HepG2 (cell line): ENCODE measurements at regions of chr9 and their contacts with region 1.

Region 1: GRCh38 chr9:105475302-105475701 is 27.5 kb downstream of the FSD1L start:
- DNase-seq: peak; percentile 39
- ATAC-seq: peak; percentile 88
- H3K4me3 ChIP-seq: no peak overlapping the region
- H3K27ac ChIP-seq: no peak overlapping the region
- H3K4me1 ChIP-seq: 0 out of 2 replicates have a peak, but pooled peaks cover 5% of the 10 kb centered on the region
- H3K27me3 ChIP-seq: no peaks in the 10 kb centered on the region
- CTCF ChIP-seq: peak; percentile 47
- EP300 ChIP-seq: no peak
- POLR2A ChIP-seq: no peak
- RAD21 ChIP-seq: no peak

Region 2: DNA sequence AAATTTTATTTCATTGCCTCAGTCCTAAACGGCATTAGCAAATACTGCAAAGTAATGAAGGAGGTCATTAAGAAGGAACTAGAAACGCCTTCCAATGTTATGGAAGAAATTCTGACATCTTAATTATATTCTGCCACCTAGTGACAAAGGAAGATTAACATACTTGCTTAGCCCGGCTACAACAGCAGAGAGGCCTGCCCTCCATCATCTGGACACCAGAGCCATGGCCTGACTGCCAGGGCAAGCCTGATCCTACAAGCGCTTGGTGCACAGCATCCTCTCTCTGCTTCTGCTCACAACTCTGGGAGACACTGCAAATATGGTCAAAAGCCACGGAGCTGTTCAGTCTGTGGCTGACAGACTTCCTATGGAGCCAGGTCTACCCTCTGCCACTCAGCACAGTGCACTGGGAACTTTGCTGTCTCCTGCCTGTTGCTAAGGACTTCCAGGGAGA is 318.1 kb before region 1 on chr9:
- CTCF ChIA-PET with region 1: no interaction called
- POLR2A ChIA-PET with region 1: no interaction called
- in situ Hi-C with region 1: no loop called
- intact Hi-C with region 1: loop called (anchors 1 kb)
- DNase-seq: peak; percentile 24
- ATAC-seq: peak; percentile 92
- H3K4me3 ChIP-seq: no peak overlapping the region
- H3K27ac ChIP-seq: no peak overlapping the region
- H3K4me1 ChIP-seq: peaks cover 24% of the 10 kb centered on the region
- H3K27me3 ChIP-seq: no peaks in the 10 kb centered on the region
- CTCF ChIP-seq: peak; percentile 74
- EP300 ChIP-seq: no peak
- POLR2A ChIP-seq: no peak
- RAD21 ChIP-seq: peak; percentile 41; the same call in 1 of the 2 replicates

Region 3: DNA sequence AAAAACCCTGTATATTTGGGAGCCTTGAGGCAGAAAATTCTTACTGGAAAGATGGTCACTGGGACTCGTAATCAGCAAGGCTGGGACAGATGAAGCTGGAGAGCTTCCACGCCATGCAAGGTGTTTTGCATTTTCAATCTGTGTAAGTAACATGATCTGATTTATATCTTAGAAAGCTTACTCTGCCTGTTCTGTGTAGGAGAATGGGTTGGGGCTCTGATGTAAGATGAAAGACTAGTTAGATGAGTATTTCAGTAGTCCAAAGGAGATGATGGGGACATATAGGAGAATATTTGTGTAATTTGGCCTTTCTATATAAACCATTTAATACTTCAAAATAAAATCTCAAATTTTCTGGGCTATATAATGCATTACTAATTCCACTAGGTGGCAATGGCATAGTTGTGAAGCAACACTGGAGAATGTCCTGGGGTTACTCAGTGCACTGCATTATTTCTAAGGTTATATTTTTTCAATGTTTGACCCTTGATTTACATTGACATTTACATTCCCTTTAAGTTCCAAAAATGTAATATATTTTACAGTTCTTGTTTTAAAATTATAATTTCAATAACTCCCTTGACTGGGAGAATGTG is 49.4 kb before region 1 on chr9:
- CTCF ChIA-PET with region 1: interaction called, 11 read pairs
- POLR2A ChIA-PET with region 1: no interaction called
- in situ Hi-C with region 1: no loop called
- intact Hi-C with region 1: no loop called
- DNase-seq: no peak
- ATAC-seq: peak; percentile 86
- H3K4me3 ChIP-seq: no peak overlapping the region
- H3K27ac ChIP-seq: no peak overlapping the region
- H3K4me1 ChIP-seq: peaks cover 22% of the 10 kb centered on the region
- H3K27me3 ChIP-seq: no peaks in the 10 kb centered on the region
- CTCF ChIP-seq: peak; percentile 58
- EP300 ChIP-seq: no peak
- POLR2A ChIP-seq: no peak
- RAD21 ChIP-seq: peak; percentile 41; the same call in 1 of the 2 replicates

Region 4: DNA sequence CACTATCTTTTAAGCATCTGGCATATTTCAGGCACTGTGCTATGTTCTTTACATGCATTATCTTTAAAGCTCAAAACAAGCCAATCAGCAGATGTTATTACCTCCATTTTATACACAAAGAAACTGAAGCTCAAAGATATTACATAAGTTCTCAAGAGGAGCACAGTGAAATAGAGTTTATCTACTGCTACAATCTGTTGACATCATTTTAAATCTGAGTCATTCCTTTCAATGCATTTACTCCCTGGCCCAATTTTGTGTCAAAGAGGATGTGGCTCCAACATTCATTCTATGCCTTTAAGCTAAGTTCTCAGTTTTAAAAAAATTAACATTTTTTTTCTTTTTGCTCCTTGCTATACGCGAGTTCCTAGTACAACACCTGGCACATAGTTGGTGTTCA is 901.4 kb after region 1 on chr9:
- CTCF ChIA-PET with region 1: no interaction called
- POLR2A ChIA-PET with region 1: no interaction called
- in situ Hi-C with region 1: no loop called
- intact Hi-C with region 1: no loop called
- DNase-seq: no peak
- ATAC-seq: no peak
- H3K4me3 ChIP-seq: no peak overlapping the region
- H3K27ac ChIP-seq: no peak overlapping the region
- H3K4me1 ChIP-seq: no peaks in the 10 kb centered on the region
- H3K27me3 ChIP-seq: no peaks in the 10 kb centered on the region
- CTCF ChIP-seq: no peak
- EP300 ChIP-seq: no peak
- POLR2A ChIP-seq: no peak
- RAD21 ChIP-seq: no peak

Region 5: DNA sequence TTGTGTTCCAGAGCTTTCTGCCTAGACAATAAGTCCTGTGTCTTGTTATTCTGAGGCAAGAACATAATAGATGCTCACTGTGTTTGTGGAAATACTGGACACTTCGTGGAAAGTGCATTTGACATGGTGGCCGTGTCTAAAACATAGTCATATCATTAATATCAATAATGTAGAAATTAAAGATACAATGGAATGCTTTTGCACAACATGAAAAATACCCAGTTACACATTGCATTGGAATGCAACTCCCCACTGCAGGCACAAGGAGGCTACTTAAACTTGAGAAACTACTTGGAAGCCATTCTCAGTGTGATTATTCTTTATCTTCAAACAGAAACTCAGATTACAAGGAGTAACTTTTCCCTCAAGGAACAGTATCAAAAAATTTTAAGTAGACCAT is 1242.4 kb after region 1 on chr9:
- CTCF ChIA-PET with region 1: no interaction called
- POLR2A ChIA-PET with region 1: no interaction called
- in situ Hi-C with region 1: no loop called
- intact Hi-C with region 1: no loop called
- DNase-seq: no peak
- ATAC-seq: no peak
- H3K4me3 ChIP-seq: no peak overlapping the region
- H3K27ac ChIP-seq: no peak overlapping the region
- H3K4me1 ChIP-seq: no peaks in the 10 kb centered on the region
- H3K27me3 ChIP-seq: no peaks in the 10 kb centered on the region
- CTCF ChIP-seq: no peak
- EP300 ChIP-seq: no peak
- POLR2A ChIP-seq: no peak
- RAD21 ChIP-seq: no peak